K562 (cell line): ENCODE measurements at regions of chr2 and their contacts with region 1.

Region 1: GRCh38 chr2:21175895-21176646 is 52.3 kb downstream of the TDRD15 start:
- DNase-seq: peak in 3 of 4 experiments; percentile 7 to 33 (median 8)
- ATAC-seq: peak; percentile 39; the same call in 1 of the 3 replicates
- H3K4me3 ChIP-seq: no peak overlapping the region
- H3K27ac ChIP-seq: no peak overlapping the region
- H3K4me1 ChIP-seq: no peaks in the 10 kb centered on the region
- H3K27me3 ChIP-seq: no peaks in the 10 kb centered on the region
- CTCF ChIP-seq: peak in 2 of 3 experiments; percentile 3 to 42; a peak in 3 of 6 replicates
- EP300 ChIP-seq: no peak
- POLR2A ChIP-seq: no peak
- RAD21 ChIP-seq: peak; percentile 71 to 85

Region 2: GRCh38 chr2:21256006-21256405 is 79.9 kb after region 1 on chr2:
- CTCF ChIA-PET with region 1: no interaction called
- POLR2A ChIA-PET with region 1: no interaction called
- in situ Hi-C with region 1: loop called (anchors 5 kb)
- intact Hi-C with region 1: loop called (anchors 10 kb)
- DNase-seq: peak in 2 of 4 experiments; percentile 20 to 63
- ATAC-seq: peak; percentile 66
- H3K4me3 ChIP-seq: no peak overlapping the region
- H3K27ac ChIP-seq: no peak overlapping the region
- H3K4me1 ChIP-seq: peaks cover 0 to 15% of the 10 kb centered on the region in 2 experiments; a peak in 2 of 5 replicates
- H3K27me3 ChIP-seq: no peaks in the 10 kb centered on the region
- CTCF ChIP-seq: no peak
- EP300 ChIP-seq: no peak
- POLR2A ChIP-seq: no peak
- RAD21 ChIP-seq: no peak

Region 3: DNA sequence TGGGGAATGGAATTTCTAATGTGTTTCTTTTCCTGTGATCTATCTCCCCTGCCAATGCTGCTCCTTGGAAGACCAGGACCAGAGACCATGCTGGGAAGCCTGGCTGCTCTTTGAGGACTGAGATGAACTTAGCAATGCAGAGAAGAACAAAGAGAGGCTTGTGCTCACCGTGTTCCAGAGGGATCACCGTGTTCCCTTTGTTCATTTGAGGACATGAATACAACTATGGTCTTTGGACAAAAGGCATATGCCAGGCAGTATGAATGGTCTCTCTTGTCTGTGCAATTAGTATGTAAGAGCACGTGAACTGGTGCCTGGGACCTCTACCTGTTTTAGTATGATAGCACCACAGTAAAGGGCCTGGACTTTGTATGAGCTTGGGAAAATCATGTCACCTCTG is 87.6 kb after region 1 on chr2:
- CTCF ChIA-PET with region 1: no interaction called
- POLR2A ChIA-PET with region 1: no interaction called
- in situ Hi-C with region 1: loop called (anchors 5 kb)
- intact Hi-C with region 1: loop called (anchors 10 kb)
- DNase-seq: no peak
- ATAC-seq: no peak
- H3K4me3 ChIP-seq: no peak overlapping the region
- H3K27ac ChIP-seq: no peak overlapping the region
- H3K4me1 ChIP-seq: no peaks in the 10 kb centered on the region; a peak in 1 of 5 replicates
- H3K27me3 ChIP-seq: peaks cover 0 to 6% of the 10 kb centered on the region in 2 experiments; a peak in 1 of 5 replicates
- CTCF ChIP-seq: no peak
- EP300 ChIP-seq: no peak
- POLR2A ChIP-seq: no peak
- RAD21 ChIP-seq: no peak

Region 4: DNA sequence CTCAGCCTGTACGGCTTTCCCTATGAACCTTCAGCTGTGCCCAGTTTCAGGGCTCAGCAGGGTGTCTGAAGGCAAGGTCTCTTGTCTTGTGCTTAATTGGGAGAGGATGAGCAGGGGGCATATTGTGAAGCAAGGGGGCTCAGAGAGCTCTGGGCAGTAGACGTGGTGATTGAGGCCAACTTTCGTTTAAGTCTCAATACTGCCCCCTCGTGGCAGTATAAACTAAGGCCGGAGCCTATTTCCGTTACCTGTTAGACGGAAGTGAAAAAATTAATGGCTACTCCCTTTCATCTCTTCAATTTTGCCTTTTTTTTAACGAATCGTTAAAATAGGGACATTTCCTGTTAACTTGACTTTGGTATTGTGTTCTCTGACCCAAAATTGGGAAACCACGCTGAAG is 141.1 kb after region 1 on chr2:
- CTCF ChIA-PET with region 1: interaction called, 19 read pairs
- POLR2A ChIA-PET with region 1: interaction called, 3 read pairs
- in situ Hi-C with region 1: loop called (anchors 10 kb)
- intact Hi-C with region 1: loop called (anchors 1 kb)
- DNase-seq: peak; percentile 66 to 81 (median 68)
- ATAC-seq: peak; percentile 93
- H3K4me3 ChIP-seq: no peak overlapping the region
- H3K27ac ChIP-seq: no peak overlapping the region
- H3K4me1 ChIP-seq: no peaks in the 10 kb centered on the region; a peak in 1 of 5 replicates
- H3K27me3 ChIP-seq: no peaks in the 10 kb centered on the region
- CTCF ChIP-seq: peak; percentile 62 to 75 (median 71)
- EP300 ChIP-seq: no peak
- POLR2A ChIP-seq: no peak
- RAD21 ChIP-seq: peak; percentile 80 to 85

Region 5: DNA sequence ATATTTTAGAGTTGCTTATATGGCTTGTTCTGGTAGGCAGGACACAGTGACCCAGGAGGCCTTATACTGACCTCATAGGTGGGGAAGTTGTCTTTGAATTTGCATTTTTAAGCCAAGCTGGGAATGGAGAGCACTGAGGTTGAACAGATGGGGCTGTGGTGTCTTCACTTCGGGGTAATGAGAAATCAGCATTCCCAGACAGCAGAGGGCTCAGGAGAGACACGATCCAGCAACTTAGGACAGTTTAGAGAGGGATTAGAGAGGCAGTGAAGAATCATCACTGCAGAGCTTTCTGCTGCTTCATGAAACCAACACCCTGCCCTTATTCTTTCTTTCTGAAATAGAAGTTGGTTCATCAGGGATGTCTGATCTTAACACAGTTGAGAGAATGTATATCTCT is 150.1 kb after region 1 on chr2:
- CTCF ChIA-PET with region 1: no interaction called
- POLR2A ChIA-PET with region 1: no interaction called
- in situ Hi-C with region 1: loop called (anchors 10 kb)
- intact Hi-C with region 1: no loop called
- DNase-seq: no peak
- ATAC-seq: no peak
- H3K4me3 ChIP-seq: no peak overlapping the region
- H3K27ac ChIP-seq: no peak overlapping the region
- H3K4me1 ChIP-seq: no peaks in the 10 kb centered on the region
- H3K27me3 ChIP-seq: no peaks in the 10 kb centered on the region
- CTCF ChIP-seq: no peak
- EP300 ChIP-seq: no peak
- POLR2A ChIP-seq: no peak
- RAD21 ChIP-seq: no peak